Activated T-helper 2 cell treated with anti-CD3 and anti-CD28 coated beads, Interferon-gamma antibody, Interleukin-2, Interleukin-4, amounts not matched to agents 10 μg/mL and 5 μg/mL and 100 μg/mL, durations not matched to agents 14 hours and 24 hours and 36 hours (primary cell): ENCODE measurements at regions of chr5 and their contacts with region 1.

Region 1: DNA sequence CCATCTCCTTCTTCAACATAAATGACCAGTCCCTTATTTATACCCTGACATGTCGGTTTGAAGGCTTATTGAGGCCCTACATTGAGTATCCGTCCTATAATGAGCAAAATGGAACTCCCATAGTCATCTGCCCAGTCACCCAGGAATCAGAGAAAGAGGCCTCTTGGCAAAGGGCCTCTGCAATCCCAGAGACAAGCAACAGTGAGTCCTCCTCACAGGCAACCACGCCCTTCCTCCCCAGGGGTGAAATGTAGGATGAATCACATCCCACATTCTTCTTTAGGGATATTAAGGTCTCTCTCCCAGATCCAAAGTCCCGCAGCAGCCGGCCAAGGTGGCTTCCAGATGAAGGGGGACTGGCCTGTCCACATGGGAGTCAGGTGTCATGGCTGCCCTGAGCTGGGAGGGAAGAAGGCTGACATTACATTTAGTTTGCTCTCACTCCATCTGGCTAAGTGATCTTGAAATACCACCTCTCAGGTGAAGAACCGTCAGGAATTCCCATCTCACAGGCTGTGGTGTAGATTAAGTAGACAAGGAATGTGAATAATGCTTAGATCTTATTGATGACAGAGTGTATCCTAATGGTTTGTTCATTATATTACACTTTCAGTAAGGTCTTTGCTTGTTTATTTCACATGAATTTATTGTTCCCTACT is 38.2 kb upstream of the BTNL3 start:
- DNase-seq: no peak
- H3K4me3 Mint-ChIP-seq: no peak overlapping the region
- H3K27ac Mint-ChIP-seq: no peak overlapping the region
- H3K4me1 Mint-ChIP-seq: peaks cover 2% of the 10 kb centered on the region
- H3K27me3 Mint-ChIP-seq: peaks cover 2% of the 10 kb centered on the region

Region 2: DNA sequence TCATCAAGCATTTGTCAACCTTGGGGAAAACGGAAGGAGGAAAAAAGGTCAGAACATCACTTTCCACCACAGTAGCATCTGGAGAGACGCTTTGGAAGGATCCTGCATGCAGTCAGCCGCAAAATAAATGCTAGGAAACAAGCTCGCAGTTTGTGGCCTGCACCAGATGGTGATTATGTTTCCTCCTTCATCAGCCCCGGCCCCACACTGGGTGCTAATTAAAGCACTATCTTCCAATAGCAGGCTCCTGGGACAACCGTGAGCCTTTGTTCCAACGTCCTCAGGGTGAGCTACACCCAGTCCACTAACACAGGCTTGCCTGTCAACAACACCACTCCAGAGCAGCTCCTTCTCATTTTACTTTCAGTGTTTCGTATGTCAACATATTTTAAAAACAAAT is 942.8 kb before region 1 on chr5:
- intact Hi-C with region 1: no loop called
- DNase-seq: no peak
- H3K4me3 Mint-ChIP-seq: no peak overlapping the region
- H3K27ac Mint-ChIP-seq: no peak overlapping the region
- H3K4me1 Mint-ChIP-seq: peaks cover 32% of the 10 kb centered on the region
- H3K27me3 Mint-ChIP-seq: no peaks in the 10 kb centered on the region

Region 3: GRCh38 chr5:181005791-181006190 is 55.4 kb after region 1 on chr5:
- intact Hi-C with region 1: loop called (anchors 2 kb)
- DNase-seq: no peak
- H3K4me3 Mint-ChIP-seq: no peak overlapping the region
- H3K27ac Mint-ChIP-seq: no peak overlapping the region
- H3K4me1 Mint-ChIP-seq: no peaks in the 10 kb centered on the region
- H3K27me3 Mint-ChIP-seq: peaks cover 2% of the 10 kb centered on the region